BJ (cell line): ENCODE measurements at regions of chr1 and their contacts with region 1.

Region 1: DNA sequence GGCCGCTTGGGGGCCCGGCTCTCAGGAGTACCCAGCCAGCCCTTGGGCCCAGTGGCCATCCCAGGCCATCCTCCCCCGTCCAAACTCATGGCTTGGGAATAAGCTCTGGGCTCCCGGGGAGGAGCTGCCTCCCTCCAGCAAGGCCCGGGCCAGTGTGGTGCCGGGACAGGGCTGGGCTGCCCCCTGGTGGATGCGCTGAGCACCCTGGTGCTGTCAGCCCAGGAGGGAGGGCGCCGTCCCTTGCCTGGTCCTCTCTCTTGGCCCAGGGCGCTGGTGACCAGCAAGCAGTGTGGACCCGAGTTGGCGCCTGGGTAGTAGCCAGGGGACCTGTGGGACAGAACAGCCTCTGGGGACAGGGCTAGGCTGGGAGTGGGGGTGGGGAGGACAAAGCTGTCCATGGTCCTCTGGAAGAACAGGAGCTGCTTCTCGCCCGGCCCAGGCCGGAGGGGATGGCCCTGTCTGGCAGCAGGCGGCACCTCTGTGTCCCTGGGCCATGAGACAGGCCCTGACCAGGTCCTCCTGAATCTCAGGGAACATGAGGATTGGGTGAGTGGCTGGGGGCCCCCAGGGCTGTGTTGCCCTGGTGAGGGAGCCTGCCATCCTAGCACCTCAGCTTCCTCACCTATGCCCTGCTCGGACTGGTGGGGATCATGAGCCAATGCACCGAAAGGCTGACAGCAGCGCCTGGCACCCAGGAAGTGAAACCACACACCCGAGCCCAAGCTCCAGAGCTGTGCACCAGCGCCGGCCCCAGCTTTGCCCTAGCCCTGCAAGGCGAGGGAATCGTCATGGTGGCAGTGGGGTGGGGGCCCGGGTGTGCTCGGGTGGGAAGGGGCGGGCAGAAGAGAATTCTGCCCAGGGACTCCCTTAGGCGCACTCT is 9.4 kb downstream of the MORN1 start:
- DNase-seq: no peak
- H3K4me3 ChIP-seq: no peak overlapping the region
- H3K27me3 ChIP-seq: no peaks in the 10 kb centered on the region
- CTCF ChIP-seq: peak; percentile 93

Region 2: GRCh38 chr1:2205191-2205952 is 176.6 kb before region 1 on chr1:
- CTCF ChIA-PET with region 1: interaction called, 328 read pairs
- POLR2A ChIA-PET with region 1: no interaction called
- DNase-seq: no peak
- H3K4me3 ChIP-seq: peak overlapping the region; percentile 49
- H3K27me3 ChIP-seq: no peaks in the 10 kb centered on the region
- CTCF ChIP-seq: no peak

Region 3: GRCh38 chr1:2212542-2213491 is 169.2 kb before region 1 on chr1:
- CTCF ChIA-PET with region 1: interaction called, 28 read pairs
- POLR2A ChIA-PET with region 1: no interaction called
- DNase-seq: peak; percentile 87
- H3K4me3 ChIP-seq: peak overlapping the region; percentile 10
- H3K27me3 ChIP-seq: no peaks in the 10 kb centered on the region
- CTCF ChIP-seq: peak; percentile 23

Region 4: DNA sequence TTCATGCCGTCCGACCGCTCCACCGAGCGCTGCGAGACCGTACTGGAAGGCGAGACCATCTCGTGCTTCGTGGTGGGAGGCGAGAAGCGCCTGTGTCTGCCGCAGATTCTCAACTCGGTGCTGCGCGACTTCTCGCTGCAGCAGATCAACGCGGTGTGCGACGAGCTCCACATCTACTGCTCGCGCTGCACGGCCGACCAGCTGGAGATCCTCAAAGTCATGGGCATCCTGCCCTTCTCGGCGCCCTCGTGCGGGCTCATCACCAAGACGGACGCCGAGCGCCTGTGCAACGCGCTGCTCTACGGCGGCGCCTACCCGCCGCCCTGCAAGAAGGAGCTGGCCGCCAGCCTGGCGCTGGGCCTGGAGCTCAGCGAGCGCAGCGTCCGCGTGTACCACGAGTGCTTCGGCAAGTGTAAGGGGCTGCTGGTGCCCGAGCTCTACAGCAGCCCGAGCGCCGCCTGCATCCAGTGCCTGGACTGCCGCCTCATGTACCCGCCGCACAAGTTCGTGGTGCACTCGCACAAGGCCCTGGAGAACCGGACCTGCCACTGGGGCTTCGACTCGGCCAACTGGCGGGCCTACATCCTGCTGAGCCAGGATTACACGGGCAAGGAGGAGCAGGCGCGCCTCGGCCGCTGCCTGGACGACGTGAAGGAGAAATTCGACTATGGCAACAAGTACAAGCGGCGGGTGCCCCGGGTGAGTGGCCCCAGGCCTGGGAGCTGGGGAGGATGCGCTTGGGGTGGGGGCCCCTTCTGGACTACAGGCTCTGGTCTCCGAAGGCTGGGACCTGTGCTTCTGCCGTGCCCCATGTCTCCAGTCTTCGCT is 152.7 kb before region 1 on chr1:
- CTCF ChIA-PET with region 1: interaction called, 47 read pairs
- POLR2A ChIA-PET with region 1: interaction called, 3 read pairs
- DNase-seq: no peak
- H3K4me3 ChIP-seq: peak overlapping the region; percentile 80
- H3K27me3 ChIP-seq: no peaks in the 10 kb centered on the region
- CTCF ChIP-seq: no peak

Region 5: DNA sequence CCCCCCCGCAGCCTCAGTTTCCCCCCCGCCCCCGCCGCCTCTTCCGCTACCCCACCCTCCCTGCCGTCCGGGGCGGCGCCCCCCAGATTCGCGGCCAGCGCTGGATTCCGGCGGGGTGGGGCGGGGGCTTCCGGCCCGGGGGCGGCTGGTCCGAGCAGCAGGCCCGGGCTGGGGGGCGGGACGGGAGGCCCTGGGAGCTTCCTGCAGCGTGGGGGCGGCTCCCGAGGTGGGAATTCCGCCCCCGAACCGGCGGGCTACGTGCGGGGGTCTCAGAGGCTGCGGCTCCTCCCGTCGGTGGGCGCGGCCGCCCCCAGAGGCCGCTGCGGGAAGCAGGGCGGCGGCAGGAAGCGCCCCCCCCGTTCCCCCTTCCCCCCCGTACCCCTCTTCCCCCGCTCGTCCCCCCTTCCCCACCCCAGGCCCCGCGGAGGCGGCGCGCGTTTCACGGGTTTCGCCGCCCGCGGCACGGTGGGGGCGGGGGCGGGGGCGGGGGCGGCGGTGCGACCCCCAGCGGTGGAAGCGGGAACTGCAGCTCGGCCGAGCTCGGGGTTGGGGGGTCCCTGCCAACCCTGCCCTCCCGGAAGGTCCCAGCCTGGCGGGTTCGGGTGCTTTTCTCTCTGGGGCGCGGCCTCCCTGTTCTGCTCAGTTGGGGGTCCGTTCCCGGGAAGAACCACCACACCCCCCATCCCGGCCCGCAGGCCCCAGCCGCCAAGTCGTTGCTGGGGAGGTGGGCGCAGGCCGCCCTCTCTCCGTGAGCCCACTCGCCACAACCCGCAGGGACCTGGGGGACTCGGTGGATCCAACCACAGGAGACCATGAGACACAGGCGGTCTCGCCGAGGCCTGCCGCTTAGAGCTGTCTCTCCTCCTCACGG is 66.9 kb before region 1 on chr1:
- CTCF ChIA-PET with region 1: interaction called, 45 read pairs
- POLR2A ChIA-PET with region 1: no interaction called
- DNase-seq: no peak
- H3K4me3 ChIP-seq: peak overlapping the region; percentile 47
- H3K27me3 ChIP-seq: no peaks in the 10 kb centered on the region
- CTCF ChIP-seq: peak; percentile 66